GM12878 (cell line): ENCODE measurements at regions of chr3 and their contacts with region 1.

Region 1: DNA sequence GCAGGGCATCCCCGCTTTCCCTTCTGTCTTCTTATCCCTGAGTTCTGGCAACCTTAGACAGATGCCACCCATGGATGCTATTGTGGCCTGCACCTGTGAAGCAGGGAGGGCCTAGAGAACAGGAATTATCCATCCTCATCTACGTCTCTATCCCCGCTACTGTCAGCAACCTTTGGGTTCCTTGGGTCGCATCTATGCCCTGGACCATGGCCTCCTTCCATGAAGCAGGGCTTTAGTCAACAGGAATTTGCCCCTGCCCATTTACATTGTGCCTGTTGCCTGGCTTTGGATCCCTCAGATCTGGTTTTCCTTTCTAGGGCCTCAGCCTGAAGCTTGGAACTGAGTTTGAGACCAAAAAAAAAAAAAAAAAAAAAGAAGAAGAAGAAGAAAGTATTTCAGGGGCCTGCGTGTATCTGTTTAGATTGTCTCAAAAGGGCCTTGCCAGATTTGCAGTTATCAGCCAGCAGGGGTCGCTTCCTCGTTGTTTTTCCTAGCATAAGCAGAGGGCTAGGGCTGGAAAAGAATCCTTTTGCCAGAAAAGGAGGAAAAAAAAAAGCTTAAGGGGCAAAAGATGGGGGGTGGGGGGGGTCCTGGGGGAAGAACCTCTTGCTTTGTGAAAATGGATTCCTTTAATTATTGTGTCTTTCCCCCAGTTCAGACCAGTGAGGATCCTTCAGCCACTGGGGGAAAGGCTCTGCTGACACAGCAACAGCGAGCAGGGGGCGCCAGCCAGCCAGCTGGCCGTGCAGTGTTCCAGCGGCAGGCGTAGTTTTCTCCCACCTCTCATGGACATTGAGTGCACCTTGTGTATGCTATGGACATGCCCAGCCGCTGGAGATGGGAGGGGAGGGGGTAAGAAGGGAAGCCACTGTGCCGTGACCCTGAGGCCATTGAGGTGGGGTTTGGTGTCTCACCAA is 65.7 kb upstream of the ALDH1L1 start:
- DNase-seq: no peak
- ATAC-seq: peak; percentile 59; the same call in 2 of the 3 replicates
- H3K4me3 ChIP-seq: no peak overlapping the region
- H3K27ac ChIP-seq: no peak overlapping the region
- H3K4me1 ChIP-seq: no peaks in the 10 kb centered on the region
- H3K27me3 ChIP-seq: no peaks in the 10 kb centered on the region; a peak in 1 of 4 replicates
- CTCF ChIP-seq: peak; percentile 33 to 43 (median 40); a peak in 5 of 6 replicates
- EP300 ChIP-seq: no peak
- POLR2A ChIP-seq: no peak
- RAD21 ChIP-seq: 0 out of 2 replicates have a peak, but pooled peaks have one; percentile 24

Region 2: GRCh38 chr3:126216416-126216815 is 29.7 kb before region 1 on chr3:
- CTCF ChIA-PET with region 1: no interaction called
- POLR2A ChIA-PET with region 1: no interaction called
- RAD21 ChIA-PET with region 1: no interaction called
- SMC1A ChIA-PET with region 1: no interaction called
- in situ Hi-C with region 1: no loop called
- intact Hi-C with region 1: no loop called
- DNase-seq: no peak
- ATAC-seq: no peak
- H3K4me3 ChIP-seq: no peak overlapping the region
- H3K27ac ChIP-seq: no peak overlapping the region
- H3K4me1 ChIP-seq: no peaks in the 10 kb centered on the region
- H3K27me3 ChIP-seq: peaks cover 9 to 12% of the 10 kb centered on the region in 2 experiments
- CTCF ChIP-seq: no peak
- EP300 ChIP-seq: no peak
- POLR2A ChIP-seq: no peak
- RAD21 ChIP-seq: no peak

Region 3: GRCh38 chr3:126475413-126476114 is 229.5 kb after region 1 on chr3 and contains the start of gene ZXDC:
- CTCF ChIA-PET with region 1: no interaction called
- POLR2A ChIA-PET with region 1: no interaction called
- RAD21 ChIA-PET with region 1: no interaction called
- SMC1A ChIA-PET with region 1: interaction called, 3 read pairs
- in situ Hi-C with region 1: no loop called
- intact Hi-C with region 1: loop called (anchors 10 kb)
- DNase-seq: peak; percentile 70
- ATAC-seq: peak; percentile 91
- H3K4me3 ChIP-seq: peak within 1 kb of the TSS; percentile 75
- H3K27ac ChIP-seq: peak within 1 kb of the TSS; percentile 61
- H3K4me1 ChIP-seq: peaks cover 9% of the 10 kb centered on the region; the same call in 1 of the 2 replicates
- H3K27me3 ChIP-seq: no peaks in the 10 kb centered on the region
- CTCF ChIP-seq: peak; percentile 37 to 65 (median 56); a peak in 5 of 6 replicates
- EP300 ChIP-seq: no peak
- POLR2A ChIP-seq: peak; percentile 89
- RAD21 ChIP-seq: peak; percentile 49; the same call in 1 of the 2 replicates
- polyA plus RNA-seq, gene ZXDC: 0.72 to 1.2 TPM